Endothelial cell of umbilical vein (primary cell): ENCODE measurements at regions of chr17 and their contacts with region 1.

Region 1: DNA sequence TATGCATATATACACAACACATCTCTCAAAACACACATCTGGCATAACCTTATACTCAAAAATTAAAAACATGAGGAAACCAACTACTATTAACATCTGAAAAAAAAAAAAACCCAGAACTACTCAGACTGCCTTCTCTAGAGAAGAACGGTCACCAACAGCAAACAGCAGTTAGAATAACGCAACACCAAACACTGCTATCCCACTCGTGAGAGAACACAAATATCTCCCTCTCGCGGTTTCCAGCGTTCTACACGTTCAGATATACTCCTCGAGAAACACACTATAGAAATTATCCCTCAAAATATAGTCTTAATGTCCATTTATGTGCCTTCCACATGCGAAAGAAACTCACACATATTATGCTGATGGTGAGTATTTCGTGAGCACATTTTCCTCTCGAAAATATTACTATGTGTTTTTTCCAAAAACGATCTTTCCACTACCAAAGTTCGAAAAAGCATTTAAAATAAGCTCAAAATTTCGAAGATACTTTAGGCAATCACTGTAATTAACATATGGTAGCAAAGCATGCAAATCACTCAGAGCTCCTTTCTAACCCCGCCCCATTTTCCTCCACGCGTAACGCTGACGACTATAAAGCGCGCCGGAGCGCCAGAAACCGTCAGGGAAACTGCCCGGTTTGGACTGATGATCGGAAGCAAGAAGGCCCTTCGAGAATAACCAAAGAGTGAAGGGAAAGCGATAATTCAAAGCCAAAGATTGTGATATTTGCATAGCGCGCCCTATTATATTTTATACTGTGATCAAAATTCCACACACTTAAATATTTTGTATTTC is 60.1 kb downstream of the TEX14 start:
- DNase-seq: peak; percentile 98
- H3K4me3 ChIP-seq: peak overlapping the region in 2 of 3 experiments; percentile 23 to 52
- H3K27ac ChIP-seq: peak overlapping the region; percentile 97
- H3K4me1 ChIP-seq: peaks cover 11% of the 10 kb centered on the region
- H3K27me3 ChIP-seq: no peaks in the 10 kb centered on the region
- CTCF ChIP-seq: peak in 1 of 2 donors; percentile 32
- POLR2A ChIP-seq: peak; percentile 100

Region 2: GRCh38 chr17:58587702-58588254 is 43.9 kb before region 1 on chr17:
- CTCF ChIA-PET with region 1: interaction called, 24 read pairs
- POLR2A ChIA-PET with region 1: interaction called, 13 read pairs
- dilution Hi-C with region 1: no loop called
- intact Hi-C with region 1: loop called (anchors 1 kb)
- DNase-seq: peak; percentile 68
- H3K4me3 ChIP-seq: no peak overlapping the region
- H3K27ac ChIP-seq: no peak overlapping the region
- H3K4me1 ChIP-seq: no peaks in the 10 kb centered on the region
- H3K27me3 ChIP-seq: peaks cover 3 to 7% of the 10 kb centered on the region in 2 experiments
- CTCF ChIP-seq: peak; percentile 92 to 95
- POLR2A ChIP-seq: no peak

Region 3: GRCh38 chr17:58648236-58648806 is 16.6 kb after region 1 on chr17:
- CTCF ChIA-PET with region 1: interaction called, 11 read pairs
- POLR2A ChIA-PET with region 1: interaction called, 35 read pairs
- dilution Hi-C with region 1: no loop called
- intact Hi-C with region 1: no loop called
- DNase-seq: no peak
- H3K4me3 ChIP-seq: no peak overlapping the region
- H3K27ac ChIP-seq: no peak overlapping the region
- H3K4me1 ChIP-seq: peaks cover under 1% of the 10 kb centered on the region
- H3K27me3 ChIP-seq: peaks cover 2 to 5% of the 10 kb centered on the region in 2 experiments
- CTCF ChIP-seq: no peak
- POLR2A ChIP-seq: no peak

Region 4: GRCh38 chr17:58666858-58667619 is 35.3 kb after region 1 on chr17:
- CTCF ChIA-PET with region 1: no interaction called
- POLR2A ChIA-PET with region 1: interaction called, 105 read pairs
- dilution Hi-C with region 1: no loop called
- intact Hi-C with region 1: no loop called
- DNase-seq: peak; percentile 76
- H3K4me3 ChIP-seq: peak overlapping the region in 1 of 3 experiments; percentile 12
- H3K27ac ChIP-seq: peak overlapping the region; percentile 18
- H3K4me1 ChIP-seq: peaks cover 8% of the 10 kb centered on the region
- H3K27me3 ChIP-seq: no peaks in the 10 kb centered on the region
- CTCF ChIP-seq: no peak
- POLR2A ChIP-seq: no peak

Region 5: GRCh38 chr17:58703137-58703972 is 71.6 kb after region 1 on chr17:
- CTCF ChIA-PET with region 1: interaction called, 3 read pairs
- POLR2A ChIA-PET with region 1: interaction called, 5 read pairs
- dilution Hi-C with region 1: loop called (anchors 10 kb)
- intact Hi-C with region 1: loop called (anchors 2 kb)
- DNase-seq: peak; percentile 86
- H3K4me3 ChIP-seq: peak overlapping the region in 1 of 3 experiments; percentile 15
- H3K27ac ChIP-seq: peak overlapping the region; percentile 97
- H3K4me1 ChIP-seq: peaks cover 18% of the 10 kb centered on the region
- H3K27me3 ChIP-seq: no peaks in the 10 kb centered on the region
- CTCF ChIP-seq: no peak
- POLR2A ChIP-seq: peak; percentile 40

Region 6: GRCh38 chr17:58753026-58753425 is 121.3 kb after region 1 on chr17:
- CTCF ChIA-PET with region 1: no interaction called
- POLR2A ChIA-PET with region 1: no interaction called
- dilution Hi-C with region 1: no loop called
- intact Hi-C with region 1: no loop called
- DNase-seq: no peak
- H3K4me3 ChIP-seq: no peak overlapping the region
- H3K27ac ChIP-seq: no peak overlapping the region
- H3K4me1 ChIP-seq: peaks cover 13% of the 10 kb centered on the region
- H3K27me3 ChIP-seq: peaks cover 13 to 31% of the 10 kb centered on the region in 2 experiments
- CTCF ChIP-seq: no peak
- POLR2A ChIP-seq: no peak

Region 7: GRCh38 chr17:59155439-59156182 is 523.9 kb after region 1 on chr17 and contains the start of gene PRR11:
- CTCF ChIA-PET with region 1: no interaction called
- POLR2A ChIA-PET with region 1: interaction called, 9 read pairs
- dilution Hi-C with region 1: no loop called
- intact Hi-C with region 1: loop called (anchors 1 kb)
- DNase-seq: peak; percentile 100
- H3K4me3 ChIP-seq: peak within 1 kb of the TSS; percentile 67 to 97 (median 93)
- H3K27ac ChIP-seq: peak within 1 kb of the TSS; percentile 79
- H3K4me1 ChIP-seq: peaks cover 51% of the 10 kb centered on the region
- H3K27me3 ChIP-seq: no peaks in the 10 kb centered on the region
- CTCF ChIP-seq: no peak
- POLR2A ChIP-seq: no peak
- total RNA-seq, gene PRR11: 82.1 and 86.3 TPM in 2 replicates